ENCODE measurements at regions of chr19 and their contacts with region 1.

Region 1: DNA sequence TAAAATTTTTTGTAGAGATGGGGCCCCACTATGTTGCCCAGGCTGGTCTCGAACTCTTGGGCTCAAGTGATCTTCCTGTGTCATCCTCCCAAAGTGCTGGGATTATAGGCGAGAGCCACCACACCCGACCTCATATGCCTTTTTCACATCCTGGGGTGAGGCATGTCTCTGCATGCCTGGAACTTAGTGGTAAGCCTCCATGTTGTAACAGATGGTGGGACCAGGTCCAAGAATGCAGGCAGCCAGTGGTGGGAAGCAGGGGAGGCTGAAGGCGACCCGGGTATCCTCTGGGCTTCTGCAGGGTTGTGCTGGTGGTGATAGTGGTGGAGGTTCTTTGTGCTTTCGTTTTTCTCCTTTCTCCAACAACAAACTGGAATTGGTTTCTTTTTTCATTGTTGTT is 30.1 kb upstream of the CCDC124 start:
- DNase-seq: peak; percentile 31
- H3K4me3 ChIP-seq: no peak overlapping the region
- CTCF ChIP-seq: no peak

Region 2: GRCh38 chr19:17871878-17872250 is 30.8 kb before region 1 on chr19 and contains the start of gene SLC5A5:
- CTCF ChIA-PET with region 1: interaction called, 14 read pairs
- POLR2A ChIA-PET with region 1: no interaction called
- DNase-seq: no peak
- H3K4me3 ChIP-seq: no peak within 1 kb of the TSS
- CTCF ChIP-seq: no peak

Region 3: DNA sequence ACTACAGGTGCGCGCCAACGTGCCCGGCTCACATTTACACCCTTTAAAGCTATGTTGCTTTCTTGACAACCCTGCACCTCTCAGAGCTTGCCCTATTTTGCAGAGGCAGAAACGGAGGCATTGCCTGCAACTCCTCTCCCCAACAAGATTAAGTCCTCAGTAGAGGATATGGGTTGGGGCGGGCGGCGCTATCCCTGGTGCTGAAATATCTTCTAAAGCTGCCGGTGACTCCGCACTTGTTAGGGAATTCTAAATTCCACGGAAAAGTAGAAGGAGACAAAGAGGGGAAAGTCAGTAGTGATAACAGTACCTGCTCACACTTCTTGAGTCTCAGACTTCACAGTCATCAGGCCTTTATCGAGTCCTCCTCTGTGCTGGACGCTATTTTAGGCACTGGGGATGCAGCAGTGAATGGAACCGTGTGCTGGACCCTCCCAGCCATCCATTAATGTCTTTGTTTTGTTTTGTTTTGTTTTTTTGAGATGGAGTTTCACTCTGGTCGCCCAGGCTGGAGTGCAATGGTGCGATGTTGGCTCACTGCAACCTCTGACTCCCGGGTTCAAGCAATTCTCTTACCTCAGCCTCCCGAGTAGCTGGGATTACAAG is 13.0 kb before region 1 on chr19:
- CTCF ChIA-PET with region 1: no interaction called
- POLR2A ChIA-PET with region 1: no interaction called
- DNase-seq: no peak
- H3K4me3 ChIP-seq: no peak overlapping the region
- CTCF ChIP-seq: no peak